ENCODE measurements at regions of chr7 and their contacts with region 1.

Region 1: GRCh38 chr7:37732253-37732652 is 48.7 kb downstream of the GPR141 start:
- DNase-seq: peak; percentile 19 to 35
- ATAC-seq: peak; percentile 75 to 84
- H3K4me3 ChIP-seq: no peak overlapping the region
- H3K27ac ChIP-seq: no peak overlapping the region
- H3K4me1 ChIP-seq: peaks cover 0 to 5% of the 10 kb centered on the region in 2 donors
- H3K27me3 ChIP-seq: no peaks in the 10 kb centered on the region
- CTCF ChIP-seq: peak in 3 of 5 experiments; percentile 22 to 38 (median 24)
- POLR2A ChIP-seq: no peak

Region 2: GRCh38 chr7:37495574-37496184 is 236.6 kb before region 1 on chr7:
- in situ Hi-C with region 1: no loop called
- intact Hi-C with region 1: loop called (anchors 10 kb)
- DNase-seq: no peak
- ATAC-seq: no peak
- H3K4me3 ChIP-seq: no peak overlapping the region
- H3K27ac ChIP-seq: no peak overlapping the region
- H3K4me1 ChIP-seq: no peaks in the 10 kb centered on the region
- H3K27me3 ChIP-seq: no peaks in the 10 kb centered on the region
- CTCF ChIP-seq: peak in 4 of 5 experiments; percentile 20 to 68 (median 44)
- POLR2A ChIP-seq: no peak

Region 3: GRCh38 chr7:37549076-37549941 is 182.9 kb before region 1 on chr7:
- in situ Hi-C with region 1: no loop called
- intact Hi-C with region 1: no loop called
- DNase-seq: no peak
- ATAC-seq: no peak
- H3K4me3 ChIP-seq: no peak overlapping the region
- H3K27ac ChIP-seq: no peak overlapping the region
- H3K4me1 ChIP-seq: peaks cover 0 to 3% of the 10 kb centered on the region in 2 donors
- H3K27me3 ChIP-seq: no peaks in the 10 kb centered on the region
- CTCF ChIP-seq: no peak
- POLR2A ChIP-seq: no peak